Common myeloid progenitor, CD34-positive (primary cell): ENCODE measurements at regions of chr10 and their contacts with region 1.

Region 1: GRCh38 chr10:75099952-75100763 is 11.3 kb upstream of the SAMD8 start:
- DNase-seq: peak; percentile 57 to 75 (median 66)
- H3K4me3 ChIP-seq: no peak overlapping the region
- H3K27ac ChIP-seq: no peak overlapping the region
- H3K4me1 ChIP-seq: peaks cover 0 to 9% (median 5%) of the 10 kb centered on the region in 4 experiments
- H3K27me3 ChIP-seq: no peaks in the 10 kb centered on the region

Region 2: GRCh38 chr10:74244097-74244685 is 856.0 kb before region 1 on chr10:
- CTCF ChIA-PET with region 1: interaction called, 86 read pairs
- POLR2A ChIA-PET with region 1: no interaction called
- DNase-seq: peak; percentile 69 to 82 (median 77)
- H3K4me3 ChIP-seq: no peak overlapping the region
- H3K27ac ChIP-seq: no peak overlapping the region
- H3K4me1 ChIP-seq: peaks cover 0 to 5% (median 1%) of the 10 kb centered on the region in 4 experiments
- H3K27me3 ChIP-seq: no peaks in the 10 kb centered on the region

Region 3: GRCh38 chr10:75111367-75111906 is 11.3 kb after region 1 on chr10 and contains the start of gene SAMD8:
- CTCF ChIA-PET with region 1: interaction called, 24 read pairs
- POLR2A ChIA-PET with region 1: interaction called, 4 read pairs
- DNase-seq: peak; percentile 98 to 99 (median 98)
- H3K4me3 ChIP-seq: peak within 1 kb of the TSS; percentile 83 to 93 (median 89)
- H3K27ac ChIP-seq: peak within 1 kb of the TSS; percentile 77 to 95
- H3K4me1 ChIP-seq: peaks cover 2 to 40% (median 17%) of the 10 kb centered on the region in 4 experiments
- H3K27me3 ChIP-seq: no peaks in the 10 kb centered on the region

Region 4: GRCh38 chr10:75123088-75123682 is 23.0 kb after region 1 on chr10:
- CTCF ChIA-PET with region 1: no interaction called
- POLR2A ChIA-PET with region 1: no interaction called
- DNase-seq: no peak
- H3K4me3 ChIP-seq: no peak overlapping the region
- H3K27ac ChIP-seq: no peak overlapping the region
- H3K4me1 ChIP-seq: peaks cover 0 to 17% (median 9%) of the 10 kb centered on the region in 4 experiments
- H3K27me3 ChIP-seq: no peaks in the 10 kb centered on the region